MCF 10A (cell line): ENCODE measurements at regions of chr2 and their contacts with region 1.

Region 1: GRCh38 chr2:49780949-49781348 is 626.6 kb upstream of the FSHR start:
- DNase-seq: no peak
- H3K4me3 Mint-ChIP-seq: no peak overlapping the region
- H3K27ac Mint-ChIP-seq: no peak overlapping the region
- H3K4me1 Mint-ChIP-seq: no peaks in the 10 kb centered on the region
- H3K27me3 Mint-ChIP-seq: no peaks in the 10 kb centered on the region
- CTCF ChIP-seq: no peak

Region 2: DNA sequence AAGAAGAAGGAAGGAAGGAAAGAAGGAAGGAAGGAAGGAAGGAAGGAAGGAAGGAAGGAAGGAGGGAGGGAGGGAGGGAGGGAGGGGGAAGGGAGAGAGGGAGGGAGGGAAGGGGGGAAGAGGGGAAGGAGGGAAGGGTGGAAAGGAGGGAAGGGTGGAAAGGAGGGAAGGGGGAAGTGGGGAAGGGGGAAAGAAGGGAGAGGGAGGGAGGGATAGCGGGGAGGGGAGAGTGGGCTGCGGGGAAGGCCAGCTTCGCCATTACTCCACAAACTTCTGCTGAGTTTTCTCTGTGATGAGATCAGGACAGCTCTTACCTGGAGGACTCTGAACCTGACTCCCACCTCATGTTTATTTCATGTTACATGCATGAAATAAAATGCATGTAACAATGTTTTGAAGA is 25.2 kb before region 1 on chr2:
- CTCF ChIA-PET with region 1: no interaction called
- POLR2A ChIA-PET with region 1: no interaction called
- intact Hi-C with region 1: loop called (anchors 1 kb)
- DNase-seq: no peak
- H3K4me3 Mint-ChIP-seq: no peak overlapping the region
- H3K27ac Mint-ChIP-seq: no peak overlapping the region
- H3K4me1 Mint-ChIP-seq: no peaks in the 10 kb centered on the region
- H3K27me3 Mint-ChIP-seq: peaks cover 19% of the 10 kb centered on the region
- CTCF ChIP-seq: no peak